GM12878 (cell line): ENCODE measurements at regions of chr5 and their contacts with region 1.

Region 1: DNA sequence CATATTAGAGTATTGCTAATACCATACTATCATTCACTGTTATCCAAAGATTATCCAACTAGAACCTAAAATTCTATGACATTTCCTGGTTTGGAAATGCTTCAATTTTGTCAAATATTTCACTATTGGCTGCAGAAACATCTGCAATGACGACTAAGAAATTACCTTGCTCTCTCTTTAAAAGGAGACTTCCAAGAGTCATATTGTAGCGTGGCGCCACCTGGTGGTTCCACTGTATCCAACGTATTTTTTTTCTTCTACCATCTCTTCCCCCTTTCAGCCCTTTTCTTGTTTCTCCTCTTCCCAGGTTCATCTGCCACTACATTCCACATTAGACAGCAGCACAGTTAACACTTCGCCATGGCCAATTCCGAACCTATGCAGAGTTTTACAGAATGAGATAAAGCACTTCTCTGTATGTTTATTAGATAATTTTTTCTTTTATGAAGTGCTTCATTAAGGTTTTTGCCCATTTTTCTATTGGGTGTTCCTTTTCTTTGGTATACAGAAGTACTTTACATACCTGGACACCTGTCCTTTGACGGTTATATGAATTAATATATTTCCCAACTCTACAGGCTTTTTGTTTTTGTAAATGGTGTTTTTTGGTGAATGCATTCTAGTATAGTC is 153.5 kb downstream of the CDC42SE2 start:
- DNase-seq: peak; percentile 34
- ATAC-seq: peak; percentile 65
- H3K4me3 ChIP-seq: no peak overlapping the region
- H3K27ac ChIP-seq: no peak overlapping the region
- H3K4me1 ChIP-seq: peaks cover 18% of the 10 kb centered on the region
- H3K27me3 ChIP-seq: no peaks in the 10 kb centered on the region
- CTCF ChIP-seq: peak; percentile 65 to 77 (median 75)
- EP300 ChIP-seq: no peak
- POLR2A ChIP-seq: no peak
- RAD21 ChIP-seq: peak; percentile 82

Region 2: DNA sequence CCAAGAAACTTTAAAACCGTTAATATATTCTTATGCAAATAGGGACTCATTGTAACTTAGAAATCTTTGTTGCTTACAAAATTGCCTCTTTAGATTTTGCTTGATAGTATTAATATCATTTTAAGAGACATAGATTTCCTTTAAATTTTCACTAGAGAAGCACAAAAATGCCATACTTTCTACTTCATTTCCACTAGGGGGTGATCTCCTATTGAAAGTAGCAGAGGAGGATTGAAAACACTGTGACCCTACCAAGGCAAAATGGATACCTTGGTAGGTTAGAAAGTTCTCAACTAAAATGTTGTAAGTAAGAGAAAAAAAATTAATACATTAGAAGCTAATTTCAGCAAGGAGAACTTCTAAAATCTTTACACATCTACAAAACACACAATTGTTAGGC is 1308.2 kb before region 1 on chr5:
- CTCF ChIA-PET with region 1: no interaction called
- POLR2A ChIA-PET with region 1: no interaction called
- RAD21 ChIA-PET with region 1: no interaction called
- SMC1A ChIA-PET with region 1: no interaction called
- in situ Hi-C with region 1: loop called (anchors 25 kb)
- intact Hi-C with region 1: loop called (anchors 5 kb)
- DNase-seq: no peak
- ATAC-seq: peak; percentile 78
- H3K4me3 ChIP-seq: no peak overlapping the region
- H3K27ac ChIP-seq: no peak overlapping the region
- H3K4me1 ChIP-seq: peaks cover 6% of the 10 kb centered on the region; the same call in 1 of the 2 replicates
- H3K27me3 ChIP-seq: no peaks in the 10 kb centered on the region
- CTCF ChIP-seq: peak; percentile 42 to 54 (median 45); a peak in 4 of 6 replicates
- EP300 ChIP-seq: no peak
- POLR2A ChIP-seq: no peak
- RAD21 ChIP-seq: peak; percentile 64

Region 3: DNA sequence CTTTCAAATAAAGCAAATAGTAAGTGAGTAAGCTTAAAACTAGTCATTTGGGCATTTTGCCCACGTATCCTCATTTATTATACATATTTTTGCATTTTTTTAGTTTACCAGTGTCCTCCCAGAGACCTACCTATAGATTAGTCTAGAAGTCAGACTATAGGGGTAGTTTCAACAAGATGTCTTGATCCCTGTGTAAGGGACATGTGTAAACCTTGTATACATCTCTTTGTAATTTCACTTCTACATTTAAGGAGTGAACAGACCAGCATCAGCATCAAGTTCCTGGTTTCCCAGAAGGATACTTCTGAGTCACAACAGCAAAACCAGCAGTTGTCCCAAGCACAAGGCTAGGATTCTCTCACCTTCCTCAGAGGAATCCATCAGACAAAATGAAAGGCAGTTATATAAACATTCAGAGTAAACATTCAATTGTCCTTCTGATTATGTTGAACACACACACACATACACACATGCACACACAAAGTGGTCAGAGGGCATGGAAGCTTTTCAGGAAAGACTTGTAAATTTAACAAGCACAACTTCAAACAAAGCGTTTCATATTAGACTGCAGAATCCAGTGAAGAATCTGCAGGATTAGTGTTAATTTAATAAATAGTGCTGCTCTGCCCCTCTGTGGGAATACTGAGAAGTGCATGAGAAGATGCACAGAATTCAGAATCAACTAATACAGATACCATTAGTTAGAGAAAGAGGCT is 307.7 kb before region 1 on chr5:
- CTCF ChIA-PET with region 1: interaction called, 4 read pairs
- POLR2A ChIA-PET with region 1: no interaction called
- RAD21 ChIA-PET with region 1: interaction called, 3 read pairs
- SMC1A ChIA-PET with region 1: interaction called, 4 read pairs
- in situ Hi-C with region 1: no loop called
- intact Hi-C with region 1: loop called (anchors 1 kb)
- DNase-seq: peak; percentile 12
- ATAC-seq: peak; percentile 94
- H3K4me3 ChIP-seq: no peak overlapping the region
- H3K27ac ChIP-seq: no peak overlapping the region
- H3K4me1 ChIP-seq: no peaks in the 10 kb centered on the region
- H3K27me3 ChIP-seq: 0 out of 4 replicates have a peak, but pooled peaks cover 0 to 2% of the 10 kb centered on the region in 2 experiments
- CTCF ChIP-seq: peak; percentile 60 to 76 (median 68)
- EP300 ChIP-seq: no peak
- POLR2A ChIP-seq: no peak
- RAD21 ChIP-seq: peak; percentile 84

Region 4: GRCh38 chr5:131214609-131215227 is 202.6 kb before region 1 on chr5:
- CTCF ChIA-PET with region 1: interaction called, 4 read pairs
- POLR2A ChIA-PET with region 1: no interaction called
- RAD21 ChIA-PET with region 1: interaction called, 4 read pairs
- SMC1A ChIA-PET with region 1: interaction called, 22 read pairs
- in situ Hi-C with region 1: no loop called
- intact Hi-C with region 1: no loop called
- DNase-seq: no peak
- ATAC-seq: no peak
- H3K4me3 ChIP-seq: peak overlapping the region; percentile 50
- H3K27ac ChIP-seq: peak overlapping the region; percentile 94
- H3K4me1 ChIP-seq: peaks cover 10% of the 10 kb centered on the region; the same call in 1 of the 2 replicates
- H3K27me3 ChIP-seq: no peaks in the 10 kb centered on the region
- CTCF ChIP-seq: no peak
- EP300 ChIP-seq: no peak
- POLR2A ChIP-seq: no peak
- RAD21 ChIP-seq: no peak

Region 5: GRCh38 chr5:131394128-131394527 is 23.2 kb before region 1 on chr5:
- CTCF ChIA-PET with region 1: interaction called, 5 read pairs
- POLR2A ChIA-PET with region 1: interaction called, 3 read pairs
- RAD21 ChIA-PET with region 1: interaction called, 11 read pairs
- SMC1A ChIA-PET with region 1: interaction called, 27 read pairs
- in situ Hi-C with region 1: no loop called
- intact Hi-C with region 1: loop called (anchors 2 kb)
- DNase-seq: peak; percentile 66
- ATAC-seq: peak; percentile 84
- H3K4me3 ChIP-seq: no peak overlapping the region
- H3K27ac ChIP-seq: peak overlapping the region; percentile 55
- H3K4me1 ChIP-seq: peaks cover 29% of the 10 kb centered on the region
- H3K27me3 ChIP-seq: no peaks in the 10 kb centered on the region
- CTCF ChIP-seq: no peak
- EP300 ChIP-seq: no peak
- POLR2A ChIP-seq: no peak
- RAD21 ChIP-seq: no peak

Region 6: DNA sequence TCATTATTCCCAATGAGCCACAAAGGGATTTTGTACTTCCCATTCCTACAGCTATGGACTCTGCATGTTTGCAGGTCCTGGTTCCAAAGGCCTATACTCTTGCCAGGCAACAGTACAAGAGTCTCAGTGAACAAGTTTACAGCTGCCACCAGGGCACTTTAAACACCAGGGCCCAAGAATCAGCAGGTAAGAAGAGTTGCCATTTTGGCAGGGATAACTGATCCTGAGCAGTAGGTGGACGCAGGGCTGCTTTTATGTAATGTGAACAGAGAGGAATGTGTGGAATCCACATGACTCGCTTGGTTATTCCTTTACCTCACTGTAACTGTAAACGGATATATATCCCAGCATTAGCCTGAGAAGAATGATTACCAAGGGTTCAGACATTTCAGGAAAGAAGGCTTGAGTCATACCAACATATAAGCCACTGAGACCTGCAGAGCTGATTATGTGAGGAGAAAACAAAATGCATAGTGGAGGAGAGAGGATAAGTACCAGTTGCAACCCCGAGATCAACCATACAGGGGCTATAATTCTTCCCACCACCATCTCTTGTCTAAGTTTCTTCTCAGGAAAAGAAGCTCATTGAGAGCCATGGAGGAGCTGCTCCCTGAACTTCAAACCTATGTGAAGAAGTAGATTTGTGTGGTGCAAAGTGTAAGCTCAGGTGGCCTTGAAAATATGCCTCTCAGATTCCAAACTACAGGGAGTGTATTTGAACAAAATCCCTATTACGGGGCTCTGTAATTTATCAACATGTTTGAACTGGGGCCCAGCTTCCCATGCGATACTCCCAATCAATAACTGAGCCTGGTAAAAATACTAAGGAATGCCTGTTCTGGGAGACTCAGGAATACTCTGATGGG is 193.1 kb after region 1 on chr5:
- CTCF ChIA-PET with region 1: no interaction called
- POLR2A ChIA-PET with region 1: no interaction called
- RAD21 ChIA-PET with region 1: no interaction called
- SMC1A ChIA-PET with region 1: no interaction called
- in situ Hi-C with region 1: no loop called
- intact Hi-C with region 1: no loop called
- DNase-seq: no peak
- ATAC-seq: no peak
- H3K4me3 ChIP-seq: no peak overlapping the region
- H3K27ac ChIP-seq: no peak overlapping the region
- H3K4me1 ChIP-seq: peaks cover 4% of the 10 kb centered on the region
- H3K27me3 ChIP-seq: no peaks in the 10 kb centered on the region
- CTCF ChIP-seq: no peak
- EP300 ChIP-seq: no peak
- POLR2A ChIP-seq: no peak
- RAD21 ChIP-seq: no peak